ENCODE measurements at regions of chr1 and their contacts with region 1.

Region 1: GRCh38 chr1:28581536-28582247 is 10.4 kb upstream of the RAB42 start:
- DNase-seq: peak; percentile 100

Region 2: GRCh38 chr1:28510665-28511440 is 70.8 kb before region 1 on chr1:
- CTCF ChIA-PET with region 1: no interaction called
- POLR2A ChIA-PET with region 1: interaction called, 17 read pairs
- DNase-seq: no peak

Region 3: DNA sequence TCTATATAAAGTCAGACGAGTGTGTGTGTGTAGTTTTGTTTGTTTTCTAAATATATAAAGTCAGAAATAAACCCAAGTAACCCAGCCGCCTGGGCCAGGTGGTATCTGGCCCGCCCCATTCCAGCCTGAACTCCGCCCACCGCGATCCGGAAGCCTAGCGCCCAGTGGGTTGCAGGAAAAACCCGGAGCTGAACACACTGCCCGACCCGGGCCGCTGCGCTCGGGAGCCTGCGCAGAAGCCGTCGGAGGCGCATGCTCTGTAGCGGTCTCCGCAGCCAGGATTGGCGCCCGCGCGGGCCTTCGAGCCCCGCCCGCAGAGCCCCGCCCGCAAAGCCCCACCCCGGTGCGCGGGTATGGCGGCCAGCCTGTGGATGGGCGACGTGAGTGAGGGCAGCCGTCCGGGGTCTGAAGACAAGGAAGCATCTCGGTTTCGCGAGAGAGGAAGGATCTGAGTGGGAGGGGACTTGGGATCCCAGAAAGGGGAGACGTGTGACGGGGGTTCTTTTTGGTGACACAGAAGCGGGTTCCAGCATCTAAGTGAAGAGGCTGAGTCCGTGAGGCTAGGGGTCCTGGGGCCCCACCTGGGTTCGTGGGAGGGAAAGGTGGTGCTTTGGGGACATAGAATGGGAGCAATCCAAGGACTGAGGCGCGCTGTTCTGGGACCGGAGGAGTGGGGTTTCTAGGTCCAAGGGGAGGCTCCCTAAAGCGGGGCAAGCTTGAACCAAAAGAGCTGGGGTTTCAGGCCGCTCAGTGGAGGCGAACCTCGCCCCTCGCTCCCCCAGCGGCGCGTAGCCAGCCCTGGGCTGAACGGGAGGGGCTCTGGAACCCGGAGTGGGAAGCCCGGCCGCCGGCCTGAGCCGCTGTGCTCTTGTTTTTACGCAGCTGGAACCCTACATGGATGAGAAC is 28.7 kb before region 1 on chr1 and contains the start of gene TRNAU1AP:
- CTCF ChIA-PET with region 1: no interaction called
- POLR2A ChIA-PET with region 1: interaction called, 92 read pairs
- DNase-seq: peak; percentile 100

Region 4: DNA sequence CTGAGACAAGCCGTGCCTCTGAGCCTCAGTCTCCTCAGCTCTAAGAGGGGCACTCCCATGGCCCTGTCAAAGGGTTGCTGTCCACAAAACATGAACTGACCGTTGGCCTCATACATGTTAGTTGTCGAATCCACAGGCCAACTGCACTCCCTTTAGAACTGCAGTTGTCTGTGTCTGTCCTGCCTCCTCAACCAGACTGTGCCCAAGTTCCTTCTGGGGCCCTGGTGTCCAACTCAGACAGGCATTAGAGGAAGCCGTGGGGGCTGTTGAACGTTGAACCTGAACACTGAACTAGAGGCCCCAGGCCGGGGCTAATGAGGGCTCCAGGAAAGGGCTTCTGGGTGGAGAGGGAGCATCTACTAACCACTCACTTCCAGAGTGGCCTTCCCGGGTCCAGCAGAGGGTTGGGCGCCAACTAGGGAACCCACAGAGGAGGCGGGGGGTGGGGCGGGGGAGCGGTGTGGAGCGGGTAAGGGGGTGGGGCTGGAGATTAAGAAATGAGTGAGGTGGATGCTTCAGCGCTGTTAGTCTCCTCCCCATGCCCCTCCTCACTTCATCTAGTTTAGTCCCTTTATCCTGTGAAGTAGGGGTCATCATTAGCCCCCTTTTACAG is 10.1 kb after region 1 on chr1 and contains the start of gene RAB42:
- CTCF ChIA-PET with region 1: interaction called, 5 read pairs
- POLR2A ChIA-PET with region 1: interaction called, 23 read pairs
- DNase-seq: no peak

Region 5: DNA sequence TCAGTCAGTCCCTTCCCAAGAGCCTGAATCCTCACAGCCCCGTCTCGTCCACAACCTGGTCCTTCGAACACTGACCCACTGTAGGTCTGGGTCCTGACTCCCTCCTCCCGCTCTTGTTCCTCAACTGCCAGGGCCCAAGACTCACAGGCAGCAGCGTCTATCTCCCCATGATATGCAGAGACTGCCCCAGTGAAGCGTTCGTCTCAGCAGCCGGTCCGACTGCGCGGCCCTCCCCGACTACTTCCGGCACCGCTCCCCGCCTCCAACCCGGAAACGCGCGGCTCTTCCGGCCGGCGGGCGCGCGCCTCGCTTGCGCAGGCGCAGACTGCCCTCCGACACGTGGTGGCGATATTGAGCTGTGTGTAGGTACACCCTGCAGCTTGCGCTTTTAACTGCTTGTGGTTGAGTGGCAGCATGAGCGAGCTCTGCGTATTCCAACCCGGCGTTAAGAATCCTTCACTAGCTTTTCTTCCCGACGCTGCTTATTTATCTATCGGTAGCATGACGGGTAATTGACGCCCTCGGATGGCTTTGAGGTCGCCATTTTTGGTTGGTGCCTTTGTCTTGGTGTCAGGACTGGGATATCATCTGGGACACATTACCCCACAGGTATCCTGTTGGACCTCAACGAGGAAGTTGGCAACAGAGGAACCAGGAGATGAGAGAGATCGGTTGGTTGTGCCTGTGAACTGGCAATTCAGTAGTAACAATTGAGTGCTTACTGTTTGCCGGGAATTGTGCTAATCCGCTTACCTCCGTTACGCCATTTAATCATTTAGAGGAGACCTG is 61.3 kb after region 1 on chr1 and contains the start of gene TAF12:
- CTCF ChIA-PET with region 1: no interaction called
- POLR2A ChIA-PET with region 1: interaction called, 22 read pairs
- DNase-seq: peak; percentile 98

Region 6: GRCh38 chr1:28845786-28846543 is 264.3 kb after region 1 on chr1:
- CTCF ChIA-PET with region 1: no interaction called
- POLR2A ChIA-PET with region 1: no interaction called
- DNase-seq: no peak

Region 7: DNA sequence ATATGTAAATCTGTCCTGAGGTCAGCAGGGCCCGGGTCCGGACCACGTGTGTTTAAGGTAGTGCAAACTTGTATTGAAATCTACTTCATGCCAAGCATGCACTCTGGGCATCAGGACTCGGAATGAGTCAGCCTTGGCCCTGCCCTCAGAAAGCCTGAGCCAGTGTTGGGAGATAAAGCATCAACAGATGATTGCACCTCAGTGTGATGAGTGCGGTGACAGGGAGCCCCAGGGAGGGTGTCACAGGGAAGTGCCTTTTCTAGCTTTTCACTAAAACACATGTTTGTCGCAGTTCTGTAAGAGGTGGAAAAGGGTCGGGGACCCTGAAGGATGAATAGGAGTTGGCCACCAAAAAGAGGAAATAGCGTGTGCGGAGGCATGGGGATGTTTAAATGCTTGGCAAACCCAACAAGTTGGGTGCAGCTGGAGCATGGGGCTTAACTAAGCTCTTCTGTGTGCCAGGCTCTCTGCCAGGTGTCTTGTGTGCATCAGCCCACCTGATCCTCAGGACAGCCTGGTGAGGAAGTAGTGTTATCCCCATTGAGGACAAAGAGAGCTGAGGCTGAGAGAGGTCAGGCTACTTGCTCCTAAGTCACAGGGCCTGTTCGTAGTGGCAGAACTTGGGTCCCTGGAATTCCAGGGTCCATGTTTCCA is 284.4 kb after region 1 on chr1:
- CTCF ChIA-PET with region 1: no interaction called
- POLR2A ChIA-PET with region 1: no interaction called
- DNase-seq: no peak